Breast epithelium (tissue), 4 donors: ENCODE measurements at regions of chr4 and their contacts with region 1.

Region 1: DNA sequence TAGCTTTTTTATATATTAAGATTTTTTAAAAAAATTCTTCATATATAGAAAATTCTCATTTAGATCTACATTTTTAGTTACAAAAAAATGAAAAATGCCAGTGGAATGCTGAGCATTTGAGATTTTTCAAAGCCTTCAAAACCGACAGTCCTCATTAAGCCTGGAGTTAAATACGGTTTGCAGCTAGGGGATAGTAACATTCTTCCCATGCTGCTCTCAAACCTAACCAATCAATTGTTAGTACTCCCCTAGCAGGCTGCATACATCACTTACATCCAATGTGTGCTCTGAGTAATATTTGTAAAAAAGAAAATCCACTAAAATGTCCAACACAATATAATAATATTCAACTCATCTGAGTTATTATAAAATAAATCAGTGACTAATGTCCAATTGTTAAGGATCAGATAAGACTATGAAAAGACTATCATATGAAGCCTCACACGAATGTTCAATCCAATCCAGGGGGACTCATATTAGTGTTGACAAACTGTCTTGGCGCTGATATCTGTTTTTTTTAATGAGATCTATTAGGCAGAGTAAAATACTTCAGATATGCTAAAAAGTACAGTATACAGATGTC is 227.6 kb upstream of the MAB21L2 start:
- DNase-seq: no peak
- H3K4me3 ChIP-seq: no peak overlapping the region
- H3K27ac ChIP-seq: no peak overlapping the region
- H3K4me1 ChIP-seq: no peaks in the 10 kb centered on the region
- H3K27me3 ChIP-seq: no peaks in the 10 kb centered on the region
- CTCF ChIP-seq: no peak
- POLR2A ChIP-seq: no peak

Region 2: GRCh38 chr4:150181536-150181935 is 172.8 kb before region 1 on chr4:
- intact Hi-C with region 1: no loop called
- DNase-seq: no peak
- H3K4me3 ChIP-seq: no peak overlapping the region
- H3K27ac ChIP-seq: no peak overlapping the region
- H3K4me1 ChIP-seq: no peaks in the 10 kb centered on the region
- H3K27me3 ChIP-seq: no peaks in the 10 kb centered on the region
- CTCF ChIP-seq: no peak
- POLR2A ChIP-seq: no peak

Region 3: GRCh38 chr4:150501009-150501727 is 146.9 kb after region 1 on chr4:
- intact Hi-C with region 1: loop called (anchors 5 kb)
- DNase-seq: no peak
- H3K4me3 ChIP-seq: no peak overlapping the region
- H3K27ac ChIP-seq: no peak overlapping the region
- H3K4me1 ChIP-seq: no peaks in the 10 kb centered on the region
- H3K27me3 ChIP-seq: no peaks in the 10 kb centered on the region
- CTCF ChIP-seq: no peak
- POLR2A ChIP-seq: no peak